Ascending aorta (tissue), 2 donors: ENCODE measurements at regions of chr18 and their contacts with region 1.

Region 1: GRCh38 chr18:76528477-76529432 is 33.7 kb upstream of the ZNF516 start:
- DNase-seq: no peak
- H3K4me3 ChIP-seq: peak overlapping the region; percentile 35 to 47
- H3K27ac ChIP-seq: no peak overlapping the region
- H3K4me1 ChIP-seq: no peaks in the 10 kb centered on the region
- H3K27me3 ChIP-seq: no peaks in the 10 kb centered on the region
- CTCF ChIP-seq: no peak

Region 2: DNA sequence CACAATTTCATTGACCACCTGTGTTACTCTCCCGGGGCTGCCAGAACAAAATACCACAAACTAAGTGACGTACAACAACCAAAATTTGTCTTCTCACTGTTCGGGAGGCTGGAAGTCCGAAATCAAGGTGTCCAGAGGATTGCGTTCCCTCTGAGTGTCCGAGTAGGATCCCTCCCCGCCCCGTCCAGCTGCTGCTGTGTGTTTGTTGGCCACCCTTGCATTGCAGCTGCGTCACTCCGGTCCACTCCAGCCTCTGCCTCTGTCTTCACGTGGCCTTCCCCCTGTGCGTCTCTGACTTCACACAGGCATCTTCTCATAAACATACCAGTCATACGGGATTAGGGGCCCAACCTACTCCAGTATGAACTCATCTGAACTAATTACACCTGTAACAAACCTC is 849.4 kb before region 1 on chr18:
- intact Hi-C with region 1: no loop called
- DNase-seq: no peak
- H3K4me3 ChIP-seq: no peak overlapping the region
- H3K27ac ChIP-seq: no peak overlapping the region
- H3K4me1 ChIP-seq: no peaks in the 10 kb centered on the region
- H3K27me3 ChIP-seq: no peaks in the 10 kb centered on the region
- CTCF ChIP-seq: no peak

Region 3: DNA sequence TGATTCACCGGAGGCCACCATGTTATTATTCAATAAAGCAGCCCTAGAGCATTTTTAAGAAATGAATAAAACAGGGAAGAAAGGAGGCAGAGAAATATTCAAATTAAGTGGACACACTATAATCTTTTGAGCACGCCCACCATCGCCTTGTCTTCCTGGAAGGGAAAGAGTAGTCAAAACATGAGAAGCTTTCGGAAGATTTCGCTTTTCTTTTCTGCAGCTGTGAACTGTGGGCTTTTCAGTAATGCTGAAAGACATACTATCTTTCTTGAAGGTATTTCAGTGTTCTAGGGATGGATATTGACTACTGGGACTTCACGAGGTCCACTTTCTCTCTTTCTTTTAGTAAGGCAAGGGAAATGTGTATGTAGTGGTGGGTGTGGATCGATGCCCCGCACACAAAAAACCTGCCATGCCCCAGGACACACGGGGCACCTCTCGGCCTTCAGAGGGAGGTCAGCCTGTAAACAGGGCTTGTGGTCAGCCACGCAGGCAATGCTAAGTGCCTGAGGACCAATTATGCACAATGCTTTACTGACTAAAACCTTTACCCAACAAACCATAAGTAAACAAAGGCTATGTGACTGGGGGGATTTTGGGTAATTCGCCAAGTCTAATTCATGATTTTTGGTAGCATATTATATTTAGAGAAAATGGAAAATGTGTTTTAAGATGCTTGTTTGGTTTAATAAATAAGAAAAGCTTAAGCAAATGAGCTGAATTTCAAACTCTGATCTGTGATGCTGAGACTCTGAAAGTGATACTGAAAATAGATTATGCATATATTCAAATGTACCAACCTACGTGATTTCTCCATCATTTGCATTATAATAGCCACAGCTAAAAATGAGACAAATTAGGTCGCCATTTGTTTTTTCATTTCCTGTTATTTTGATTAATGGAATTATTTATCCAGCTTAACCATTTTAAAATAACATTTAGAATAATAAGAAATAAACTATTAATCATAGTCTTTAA is 164.2 kb before region 1 on chr18:
- intact Hi-C with region 1: no loop called
- DNase-seq: no peak
- H3K4me3 ChIP-seq: no peak overlapping the region
- H3K27ac ChIP-seq: no peak overlapping the region
- H3K4me1 ChIP-seq: no peaks in the 10 kb centered on the region
- H3K27me3 ChIP-seq: no peaks in the 10 kb centered on the region
- CTCF ChIP-seq: no peak

Region 4: DNA sequence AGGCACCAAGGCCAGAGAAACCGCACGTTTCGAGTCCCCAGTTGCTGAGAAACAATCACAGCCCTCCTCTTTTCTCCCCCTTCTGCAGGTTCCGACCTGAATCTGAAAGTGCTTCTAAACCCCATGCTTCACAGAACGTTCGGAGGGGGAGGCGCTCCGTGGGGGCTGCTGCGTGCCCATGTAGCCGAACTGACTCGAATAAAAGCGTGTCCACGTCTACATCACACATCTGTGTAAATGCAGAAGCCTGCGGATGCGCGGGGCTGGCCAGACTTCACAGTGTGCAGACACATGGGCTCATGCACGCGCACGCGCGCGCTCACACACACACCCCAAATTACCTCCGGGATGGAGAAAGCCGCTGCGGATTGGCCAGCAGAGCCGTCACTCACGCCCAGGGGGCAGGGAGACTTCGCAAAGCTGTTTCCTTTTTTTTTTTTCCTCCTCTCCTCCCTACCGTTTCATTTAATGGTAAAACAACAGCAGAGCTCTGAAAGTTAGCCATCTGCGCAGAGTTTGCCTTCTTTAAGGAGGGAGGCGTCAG is 36.0 kb before region 1 on chr18:
- intact Hi-C with region 1: no loop called
- DNase-seq: peak; percentile 95 to 99
- H3K4me3 ChIP-seq: peak overlapping the region; percentile 67 to 78
- H3K27ac ChIP-seq: peak overlapping the region; percentile 67 to 72
- H3K4me1 ChIP-seq: peaks cover 6 to 7% of the 10 kb centered on the region in 2 donors
- H3K27me3 ChIP-seq: no peaks in the 10 kb centered on the region
- CTCF ChIP-seq: no peak

Region 5: DNA sequence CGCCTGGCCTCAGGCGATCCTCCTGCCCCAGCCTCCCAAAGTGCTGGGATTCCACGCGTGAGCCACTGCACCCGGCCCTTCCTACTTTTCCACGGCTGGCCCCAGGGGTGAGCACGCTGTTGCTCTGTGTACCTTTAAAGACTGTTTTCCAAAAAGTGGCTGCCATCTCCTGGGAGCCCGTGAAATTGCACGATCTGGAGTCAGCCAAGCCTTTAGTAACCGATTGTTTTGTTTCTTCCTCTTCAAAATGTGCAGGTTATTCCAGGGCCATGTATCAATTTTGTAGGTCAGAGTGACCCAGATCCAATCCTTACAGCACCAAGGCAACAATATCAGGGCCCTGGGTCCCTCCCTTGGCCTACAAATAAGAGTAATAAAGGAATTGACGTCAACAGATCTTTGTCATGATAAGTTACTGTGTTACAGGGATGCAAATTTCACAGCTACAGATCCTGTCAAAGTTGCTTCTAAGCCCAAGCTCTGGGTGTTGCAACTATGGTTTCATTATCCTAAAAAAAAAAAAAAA is 158.0 kb after region 1 on chr18:
- intact Hi-C with region 1: loop called (anchors 10 kb)
- DNase-seq: peak in 1 of 2 donors; percentile 83
- H3K4me3 ChIP-seq: no peak overlapping the region
- H3K27ac ChIP-seq: no peak overlapping the region
- H3K4me1 ChIP-seq: no peaks in the 10 kb centered on the region
- H3K27me3 ChIP-seq: no peaks in the 10 kb centered on the region
- CTCF ChIP-seq: peak; percentile 52 to 65 (median 55)

Region 6: DNA sequence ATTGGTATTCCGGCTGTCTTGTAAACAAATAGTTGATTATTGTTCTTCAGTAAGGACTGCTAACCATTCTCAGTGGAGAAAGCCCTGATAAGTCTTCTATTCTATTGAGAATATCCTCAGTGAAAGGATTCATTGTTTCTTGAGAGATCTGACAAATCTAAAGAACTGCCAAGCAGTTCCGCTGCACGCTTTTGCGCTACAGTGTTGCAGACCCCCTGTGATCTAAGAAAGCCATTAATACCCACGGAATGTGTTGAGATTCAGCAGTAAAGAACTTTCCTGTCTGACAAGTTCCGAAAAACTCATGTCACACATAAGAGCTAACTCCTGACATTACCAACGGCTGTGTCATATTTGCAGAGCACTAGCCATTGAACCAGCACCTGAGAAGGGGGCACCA is 357.4 kb after region 1 on chr18:
- intact Hi-C with region 1: no loop called
- DNase-seq: no peak
- H3K4me3 ChIP-seq: no peak overlapping the region
- H3K27ac ChIP-seq: no peak overlapping the region
- H3K4me1 ChIP-seq: no peaks in the 10 kb centered on the region
- H3K27me3 ChIP-seq: no peaks in the 10 kb centered on the region
- CTCF ChIP-seq: no peak